T-cell (primary cell): ENCODE measurements at regions of chr12 and their contacts with region 1.

Region 1: DNA sequence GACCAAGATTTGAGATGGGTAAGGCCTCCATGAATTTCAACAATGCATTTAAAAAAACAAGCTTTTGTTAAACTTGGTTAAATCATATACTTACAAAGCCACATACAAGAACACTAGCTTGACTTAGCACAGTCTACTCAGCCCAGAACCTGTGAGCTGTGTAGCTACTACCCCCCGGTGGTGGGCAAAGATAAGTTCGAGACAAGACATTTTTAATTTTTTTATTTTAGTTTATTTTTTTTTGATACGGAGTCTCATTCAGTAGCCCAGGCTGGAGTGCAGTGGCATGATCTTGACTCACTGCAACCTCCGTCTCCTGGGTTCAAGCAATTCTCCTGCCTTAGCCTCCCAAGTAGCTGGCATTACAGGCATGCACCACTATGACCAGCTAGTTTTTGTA is 3.7 kb upstream of the NECAP1 start:
- DNase-seq: peak in 34 of 35 experiments; percentile 42 to 82 (median 66)
- ATAC-seq: peak; percentile 23 to 40 (median 32)
- H3K4me3 ChIP-seq: no peak overlapping the region
- H3K4me3 Mint-ChIP-seq: no peak overlapping the region
- H3K27ac ChIP-seq: no peak overlapping the region
- H3K27ac Mint-ChIP-seq: peak overlapping the region; percentile 94
- H3K4me1 ChIP-seq: peaks cover 15 to 23% of the 10 kb centered on the region in 2 experiments
- H3K4me1 Mint-ChIP-seq: peaks cover 45 to 61% (median 47%) of the 10 kb centered on the region in 3 donors
- H3K27me3 ChIP-seq: no peaks in the 10 kb centered on the region
- H3K27me3 Mint-ChIP-seq: no peaks in the 10 kb centered on the region

Region 2: GRCh38 chr12:6140651-6141447 is 1937.5 kb before region 1 on chr12:
- CTCF ChIA-PET with region 1: no interaction called
- POLR2A ChIA-PET with region 1: no interaction called
- DNase-seq: peak in 32 of 35 experiments; percentile 3 to 69 (median 30)
- ATAC-seq: peak; percentile 85 to 97 (median 93)
- H3K4me3 ChIP-seq: peak overlapping the region in 1 of 2 donors; percentile 32
- H3K4me3 Mint-ChIP-seq: peak overlapping the region; percentile 53 to 67 (median 56)
- H3K27ac ChIP-seq: peak overlapping the region; percentile 69
- H3K27ac Mint-ChIP-seq: peak overlapping the region; percentile 98 to 99
- H3K4me1 ChIP-seq: peaks cover 32 to 61% of the 10 kb centered on the region in 2 experiments
- H3K4me1 Mint-ChIP-seq: peaks cover 47 to 49% (median 48%) of the 10 kb centered on the region in 3 donors
- H3K27me3 ChIP-seq: peaks cover 0 to 8% of the 10 kb centered on the region in 2 experiments
- H3K27me3 Mint-ChIP-seq: peaks cover 0 to 1% of the 10 kb centered on the region in 2 donors

Region 3: GRCh38 chr12:7859552-7859951 is 218.8 kb before region 1 on chr12:
- CTCF ChIA-PET with region 1: interaction called, 7 to 11 read pairs
- POLR2A ChIA-PET with region 1: no interaction called
- DNase-seq: no peak
- ATAC-seq: peak in 1 of 4 experiments; percentile 13
- H3K4me3 ChIP-seq: no peak overlapping the region
- H3K4me3 Mint-ChIP-seq: no peak overlapping the region
- H3K27ac ChIP-seq: no peak overlapping the region
- H3K27ac Mint-ChIP-seq: no peak overlapping the region
- H3K4me1 ChIP-seq: peaks cover 0 to 15% of the 10 kb centered on the region in 2 experiments
- H3K4me1 Mint-ChIP-seq: peaks cover 7 to 11% (median 10%) of the 10 kb centered on the region in 3 donors
- H3K27me3 ChIP-seq: peaks cover 0 to 9% of the 10 kb centered on the region in 2 experiments
- H3K27me3 Mint-ChIP-seq: peaks cover 0 to 6% of the 10 kb centered on the region in 2 donors

Region 4: GRCh38 chr12:7948589-7949260 is 129.7 kb before region 1 on chr12:
- CTCF ChIA-PET with region 1: interaction called in 1 of 2 experiments, 10 read pairs
- POLR2A ChIA-PET with region 1: no interaction called
- DNase-seq: no peak
- ATAC-seq: no peak
- H3K4me3 ChIP-seq: no peak overlapping the region
- H3K4me3 Mint-ChIP-seq: no peak overlapping the region
- H3K27ac ChIP-seq: no peak overlapping the region
- H3K27ac Mint-ChIP-seq: no peak overlapping the region
- H3K4me1 ChIP-seq: peaks cover 0 to 5% of the 10 kb centered on the region in 2 experiments
- H3K4me1 Mint-ChIP-seq: peaks cover 0 to 6% (median 4%) of the 10 kb centered on the region in 3 donors
- H3K27me3 ChIP-seq: no peaks in the 10 kb centered on the region
- H3K27me3 Mint-ChIP-seq: no peaks in the 10 kb centered on the region

Region 5: DNA sequence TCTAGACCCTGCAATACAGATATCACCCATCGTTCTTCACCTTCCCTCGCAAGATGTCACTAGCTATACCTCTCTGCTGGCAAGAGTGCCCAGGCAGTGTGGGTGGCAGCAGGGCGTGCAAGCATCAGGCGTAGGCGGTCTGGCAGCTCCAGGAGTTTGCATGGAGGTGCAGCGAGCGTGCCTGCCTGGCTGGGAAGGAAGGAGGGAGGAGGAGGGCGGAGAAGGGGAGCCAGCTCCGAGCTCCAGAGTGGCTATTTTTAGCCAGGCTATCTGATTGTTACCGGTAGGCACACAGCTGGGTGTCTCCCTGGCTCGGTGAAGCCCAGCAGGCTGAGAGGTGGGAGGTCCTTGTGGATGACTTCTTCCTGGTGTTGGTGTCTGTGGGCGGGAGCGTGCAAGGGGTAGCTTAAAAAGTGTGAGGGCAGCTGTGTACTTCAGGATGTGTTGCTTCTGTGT is 39.7 kb before region 1 on chr12:
- CTCF ChIA-PET with region 1: interaction called, 7 to 88 read pairs
- POLR2A ChIA-PET with region 1: interaction called in 1 of 2 experiments, 8 read pairs
- DNase-seq: peak in 9 of 35 experiments; percentile 12 to 44 (median 25)
- ATAC-seq: peak; percentile 48 to 66 (median 58)
- H3K4me3 ChIP-seq: peak overlapping the region; percentile 27 to 39
- H3K4me3 Mint-ChIP-seq: peak overlapping the region; percentile 53 to 88 (median 67)
- H3K27ac ChIP-seq: peak overlapping the region; percentile 10
- H3K27ac Mint-ChIP-seq: peak overlapping the region; percentile 68 to 81
- H3K4me1 ChIP-seq: peaks cover 31 to 52% of the 10 kb centered on the region in 2 experiments
- H3K4me1 Mint-ChIP-seq: peaks cover 62 to 67% (median 62%) of the 10 kb centered on the region in 3 donors
- H3K27me3 ChIP-seq: no peaks in the 10 kb centered on the region
- H3K27me3 Mint-ChIP-seq: no peaks in the 10 kb centered on the region

Region 6: DNA sequence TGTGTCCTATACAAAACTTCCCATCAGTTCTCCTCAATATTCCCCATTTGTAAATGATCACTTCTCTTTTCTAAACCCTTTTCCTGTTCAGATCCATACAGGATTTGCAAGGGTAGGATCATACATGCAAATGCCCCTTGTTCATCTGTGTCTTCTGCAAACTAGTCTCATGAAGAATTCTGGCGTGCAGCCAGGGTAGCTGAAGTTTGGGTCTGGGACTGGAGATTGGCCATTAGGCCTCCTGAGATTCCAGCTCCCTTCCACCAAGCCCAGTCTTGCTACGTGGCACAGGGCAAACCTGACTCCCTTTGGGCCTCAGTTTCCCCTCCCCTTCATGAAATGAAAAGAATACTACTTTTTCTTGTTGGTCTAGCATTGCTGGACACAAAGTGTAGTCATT is 23.6 kb before region 1 on chr12:
- CTCF ChIA-PET with region 1: interaction called, 15 to 21 read pairs
- POLR2A ChIA-PET with region 1: no interaction called
- DNase-seq: no peak
- ATAC-seq: no peak
- H3K4me3 ChIP-seq: no peak overlapping the region
- H3K4me3 Mint-ChIP-seq: no peak overlapping the region
- H3K27ac ChIP-seq: no peak overlapping the region
- H3K27ac Mint-ChIP-seq: no peak overlapping the region
- H3K4me1 ChIP-seq: no peaks in the 10 kb centered on the region
- H3K4me1 Mint-ChIP-seq: peaks cover 0 to 3% (median 0%) of the 10 kb centered on the region in 3 donors
- H3K27me3 ChIP-seq: no peaks in the 10 kb centered on the region
- H3K27me3 Mint-ChIP-seq: no peaks in the 10 kb centered on the region

Region 7: DNA sequence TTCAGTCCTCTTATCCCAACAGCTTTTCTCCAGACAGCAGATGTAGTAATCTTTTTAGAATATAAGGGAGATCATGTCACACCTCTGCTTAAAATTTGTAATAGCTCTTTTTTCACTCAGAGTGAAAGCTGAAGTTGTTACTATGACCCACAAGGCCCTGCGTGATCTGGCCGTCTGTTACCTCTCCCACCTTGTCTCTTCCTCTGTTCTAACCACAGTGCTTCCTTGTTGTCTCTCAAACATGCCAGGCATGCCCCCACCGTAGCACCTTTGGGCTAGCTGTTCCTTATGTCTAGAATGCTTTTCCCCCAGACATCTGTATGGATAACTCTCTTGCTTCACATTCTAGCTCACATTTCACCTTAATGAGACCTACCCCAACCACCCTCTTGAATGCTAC is 10.2 kb after region 1 on chr12:
- CTCF ChIA-PET with region 1: interaction called in 1 of 2 experiments, 17 read pairs
- POLR2A ChIA-PET with region 1: interaction called in 1 of 2 experiments, 4 read pairs
- DNase-seq: peak in 32 of 35 experiments; percentile 15 to 73 (median 32)
- ATAC-seq: peak; percentile 92 to 99 (median 98)
- H3K4me3 ChIP-seq: peak overlapping the region in 1 of 2 donors; percentile 3
- H3K4me3 Mint-ChIP-seq: peak overlapping the region; percentile 54 to 78 (median 65)
- H3K27ac ChIP-seq: peak overlapping the region; percentile 68
- H3K27ac Mint-ChIP-seq: peak overlapping the region; percentile 87 to 94
- H3K4me1 ChIP-seq: peaks cover 25 to 36% of the 10 kb centered on the region in 2 experiments
- H3K4me1 Mint-ChIP-seq: peaks cover 57 to 59% (median 58%) of the 10 kb centered on the region in 3 donors
- H3K27me3 ChIP-seq: no peaks in the 10 kb centered on the region
- H3K27me3 Mint-ChIP-seq: no peaks in the 10 kb centered on the region